Vagina (tissue), 2 donors: ENCODE measurements at regions of chr2 and their contacts with region 1.

Region 1: GRCh38 chr2:197705121-197705911 is at the start of gene MARS2:
- DNase-seq: peak in 1 of 2 donors; percentile 93
- H3K4me3 ChIP-seq: peak within 1 kb of the TSS; percentile 85 to 93
- H3K27ac ChIP-seq: peak within 1 kb of the TSS; percentile 71
- H3K4me1 ChIP-seq: peaks cover 31% of the 10 kb centered on the region
- H3K27me3 ChIP-seq: no peaks in the 10 kb centered on the region
- CTCF ChIP-seq: peak in 1 of 3 experiments; percentile 43
- POLR2A ChIP-seq: no peak
- total RNA-seq, gene MARS2: 8.3 TPM

Region 2: GRCh38 chr2:197499594-197500526 is 205.5 kb before region 1 on chr2 and contains the starts of genes HSPD1 and HSPE1:
- intact Hi-C with region 1: loop called (anchors 10 kb)
- DNase-seq: peak; percentile 99
- H3K4me3 ChIP-seq: peak within 1 kb of the TSS; percentile 93 to 94
- H3K27ac ChIP-seq: peak within 1 kb of the TSS; percentile 100
- H3K4me1 ChIP-seq: peaks cover 53% of the 10 kb centered on the region
- H3K27me3 ChIP-seq: no peaks in the 10 kb centered on the region
- CTCF ChIP-seq: peak in 2 of 3 experiments; percentile 12 to 36
- POLR2A ChIP-seq: peak; percentile 89 to 97
- total RNA-seq, gene HSPD1: 127 TPM
- total RNA-seq, gene HSPE1: 39.0 TPM

Region 3: GRCh38 chr2:197838036-197838435 is 132.7 kb after region 1 on chr2:
- intact Hi-C with region 1: no loop called
- DNase-seq: no peak
- H3K4me3 ChIP-seq: peak overlapping the region; percentile 8 to 12
- H3K27ac ChIP-seq: peak overlapping the region; percentile 24
- H3K4me1 ChIP-seq: no peaks in the 10 kb centered on the region
- H3K27me3 ChIP-seq: no peaks in the 10 kb centered on the region
- CTCF ChIP-seq: no peak
- POLR2A ChIP-seq: no peak